MCF 10A (cell line): ENCODE measurements at regions of chr16 and their contacts with region 1.

Region 1: DNA sequence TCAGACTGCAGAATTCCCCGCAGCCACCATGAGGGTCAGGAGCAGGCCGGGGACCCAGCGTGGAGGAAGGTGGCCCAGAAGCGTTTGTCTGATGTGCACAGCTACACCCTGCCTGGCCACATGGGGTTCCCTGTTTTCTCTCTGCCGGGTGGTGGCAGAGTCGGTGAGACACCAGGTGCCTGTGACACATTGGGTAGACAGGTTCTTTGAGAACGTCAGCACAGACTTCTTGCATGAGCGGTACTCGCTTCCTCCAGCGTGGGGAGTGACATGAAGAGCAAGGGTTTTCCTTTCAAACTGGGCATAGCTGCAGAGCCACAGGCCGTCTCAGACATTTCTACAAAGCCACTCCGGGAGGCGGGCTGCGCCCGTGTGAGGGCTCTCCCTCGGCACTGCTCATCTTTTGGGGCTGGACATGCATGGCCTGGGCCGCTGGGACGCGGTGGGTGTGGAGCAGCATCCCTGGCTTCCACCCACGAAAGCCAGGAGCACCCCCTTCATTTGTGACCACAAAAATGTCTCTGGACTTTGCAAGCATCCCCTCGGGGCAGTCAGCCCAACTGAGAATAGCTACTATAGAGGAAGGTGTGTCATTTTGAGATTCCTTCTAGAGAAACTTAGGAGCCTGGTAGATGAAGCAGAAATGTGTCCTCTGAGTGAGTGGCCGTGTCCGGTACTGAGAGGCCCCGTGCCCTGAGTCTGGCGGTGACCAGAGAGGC is 26.0 kb downstream of the NME3 start:
- DNase-seq: peak; percentile 88
- H3K4me3 Mint-ChIP-seq: peak overlapping the region; percentile 17
- H3K27ac Mint-ChIP-seq: peak overlapping the region; percentile 89
- H3K4me1 Mint-ChIP-seq: peaks cover 34% of the 10 kb centered on the region
- H3K27me3 Mint-ChIP-seq: no peaks in the 10 kb centered on the region
- CTCF ChIP-seq: no peak

Region 2: GRCh38 chr16:1610276-1611017 is 134.9 kb before region 1 on chr16:
- CTCF ChIA-PET with region 1: no interaction called
- POLR2A ChIA-PET with region 1: interaction called, 10 read pairs
- intact Hi-C with region 1: no loop called
- DNase-seq: peak; percentile 89
- H3K4me3 Mint-ChIP-seq: peak overlapping the region; percentile 85
- H3K27ac Mint-ChIP-seq: peak overlapping the region; percentile 97
- H3K4me1 Mint-ChIP-seq: peaks cover 11% of the 10 kb centered on the region
- H3K27me3 Mint-ChIP-seq: no peaks in the 10 kb centered on the region
- CTCF ChIP-seq: no peak

Region 3: GRCh38 chr16:1691276-1691675 is 54.1 kb before region 1 on chr16:
- CTCF ChIA-PET with region 1: no interaction called
- POLR2A ChIA-PET with region 1: interaction called, 24 read pairs
- intact Hi-C with region 1: no loop called
- DNase-seq: peak; percentile 48
- H3K4me3 Mint-ChIP-seq: peak overlapping the region; percentile 62
- H3K27ac Mint-ChIP-seq: peak overlapping the region; percentile 97
- H3K4me1 Mint-ChIP-seq: peaks cover 51% of the 10 kb centered on the region
- H3K27me3 Mint-ChIP-seq: no peaks in the 10 kb centered on the region
- CTCF ChIP-seq: peak; percentile 33

Region 4: GRCh38 chr16:1705688-1706385 is 39.5 kb before region 1 on chr16 and contains the start of gene MAPK8IP3:
- CTCF ChIA-PET with region 1: interaction called, 5 read pairs
- POLR2A ChIA-PET with region 1: interaction called, 85 read pairs
- intact Hi-C with region 1: no loop called
- DNase-seq: peak; percentile 85
- H3K4me3 Mint-ChIP-seq: peak within 1 kb of the TSS; percentile 83
- H3K27ac Mint-ChIP-seq: peak within 1 kb of the TSS; percentile 87
- H3K4me1 Mint-ChIP-seq: peaks cover 18% of the 10 kb centered on the region
- H3K27me3 Mint-ChIP-seq: no peaks in the 10 kb centered on the region
- CTCF ChIP-seq: peak; percentile 90
- total RNA-seq, gene MAPK8IP3: 77.4 and 86.6 TPM in 2 replicates

Region 5: DNA sequence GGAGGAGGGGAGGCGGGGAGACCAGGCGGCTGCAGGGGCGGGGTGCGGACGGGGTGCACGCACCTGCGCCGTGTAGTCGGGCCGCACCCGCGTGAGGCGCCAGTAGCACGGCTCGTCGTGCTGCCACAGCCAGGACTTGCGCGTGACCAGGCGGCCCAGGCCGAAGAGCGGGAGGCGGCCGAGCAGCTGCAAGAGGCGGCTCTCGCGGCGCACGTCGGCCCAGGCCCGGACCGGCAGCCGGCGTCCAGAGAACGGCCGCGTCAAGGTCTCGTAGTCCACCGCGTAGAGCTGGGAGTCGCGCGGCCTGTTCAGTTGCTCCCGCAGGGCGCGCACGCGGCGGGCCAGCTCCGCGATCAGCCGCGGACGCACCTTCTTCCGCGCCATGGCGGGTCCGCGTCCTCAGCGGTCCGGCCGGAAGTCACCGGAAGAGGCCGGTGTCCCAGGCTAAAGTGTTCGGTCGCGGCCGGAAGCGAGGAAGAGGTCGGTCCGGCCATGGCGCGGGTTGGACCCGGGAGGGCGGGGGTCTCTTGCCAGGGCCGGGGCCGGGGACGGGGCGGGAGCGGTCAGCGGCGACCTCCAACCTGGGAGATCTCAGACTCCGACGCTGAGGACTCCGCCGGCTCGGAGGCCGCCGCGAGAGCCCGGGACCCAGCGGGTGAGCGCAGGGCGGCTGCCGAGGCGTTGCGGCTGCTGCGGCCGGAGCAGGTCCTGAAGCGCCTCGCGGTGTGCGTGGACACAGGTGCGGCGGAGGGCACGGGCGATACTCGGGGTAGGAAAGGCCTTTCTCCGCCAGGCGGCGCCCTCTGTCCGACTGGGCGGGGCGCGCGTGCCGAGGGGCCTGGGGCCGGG is 27.6 kb after region 1 on chr16 and contains the starts of genes EME2 and MRPS34:
- CTCF ChIA-PET with region 1: interaction called, 6 read pairs
- POLR2A ChIA-PET with region 1: interaction called, 95 read pairs
- intact Hi-C with region 1: loop called (anchors 2 kb)
- DNase-seq: peak; percentile 84
- H3K4me3 Mint-ChIP-seq: peak within 1 kb of the TSS; percentile 80
- H3K27ac Mint-ChIP-seq: peak within 1 kb of the TSS; percentile 80
- H3K4me1 Mint-ChIP-seq: peaks cover 7% of the 10 kb centered on the region
- H3K27me3 Mint-ChIP-seq: no peaks in the 10 kb centered on the region
- CTCF ChIP-seq: peak; percentile 92
- total RNA-seq, gene EME2: 20.6 TPM in 2 replicates
- total RNA-seq, gene MRPS34: 82.2 and 102 TPM in 2 replicates

Region 6: DNA sequence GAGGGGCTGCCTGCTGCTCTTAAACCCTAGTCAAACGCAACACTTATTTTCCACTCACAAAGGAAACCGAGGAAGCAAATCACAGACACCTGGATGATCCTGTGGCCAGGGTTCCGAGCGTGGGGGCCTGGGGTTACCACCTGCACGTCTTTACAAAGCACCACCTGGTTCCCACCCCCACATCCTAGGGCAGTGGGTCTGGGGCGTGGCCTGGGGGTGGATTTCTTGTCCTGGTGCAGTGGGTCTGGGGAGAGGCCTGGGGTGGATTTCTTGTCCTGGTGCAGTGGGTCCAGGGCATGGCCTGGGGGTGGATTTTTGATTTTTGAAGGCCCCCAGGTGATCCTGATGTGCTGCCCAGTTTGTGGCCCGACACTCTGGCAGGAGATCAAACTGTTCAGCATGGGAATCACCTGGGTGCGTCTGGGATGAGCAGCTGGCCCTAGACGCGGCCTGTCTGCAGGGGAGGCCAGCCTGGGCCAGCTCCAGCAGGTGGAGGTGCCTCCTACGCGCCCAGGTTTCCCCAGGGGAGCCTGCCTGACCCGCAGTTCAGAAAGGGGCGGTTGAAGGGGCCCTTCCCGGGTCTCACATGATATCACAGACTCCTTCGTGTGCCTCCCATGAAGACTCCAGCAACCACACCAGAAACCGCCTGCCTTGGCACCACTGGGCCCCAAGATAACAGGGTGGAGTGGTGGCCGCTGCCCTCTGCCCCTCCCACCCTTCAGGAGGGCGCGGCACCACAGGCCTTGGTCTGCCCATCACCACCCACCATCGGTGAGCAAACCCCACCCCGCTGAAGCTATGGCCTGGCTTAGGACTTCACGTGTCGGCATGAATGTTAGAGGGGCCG is 75.0 kb after region 1 on chr16:
- CTCF ChIA-PET with region 1: no interaction called
- POLR2A ChIA-PET with region 1: no interaction called
- intact Hi-C with region 1: no loop called
- DNase-seq: no peak
- H3K4me3 Mint-ChIP-seq: no peak overlapping the region
- H3K27ac Mint-ChIP-seq: no peak overlapping the region
- H3K4me1 Mint-ChIP-seq: no peaks in the 10 kb centered on the region
- H3K27me3 Mint-ChIP-seq: no peaks in the 10 kb centered on the region
- CTCF ChIP-seq: no peak